GM10248 (cell line): ENCODE measurements at regions of chr6 and their contacts with region 1.

Region 1: DNA sequence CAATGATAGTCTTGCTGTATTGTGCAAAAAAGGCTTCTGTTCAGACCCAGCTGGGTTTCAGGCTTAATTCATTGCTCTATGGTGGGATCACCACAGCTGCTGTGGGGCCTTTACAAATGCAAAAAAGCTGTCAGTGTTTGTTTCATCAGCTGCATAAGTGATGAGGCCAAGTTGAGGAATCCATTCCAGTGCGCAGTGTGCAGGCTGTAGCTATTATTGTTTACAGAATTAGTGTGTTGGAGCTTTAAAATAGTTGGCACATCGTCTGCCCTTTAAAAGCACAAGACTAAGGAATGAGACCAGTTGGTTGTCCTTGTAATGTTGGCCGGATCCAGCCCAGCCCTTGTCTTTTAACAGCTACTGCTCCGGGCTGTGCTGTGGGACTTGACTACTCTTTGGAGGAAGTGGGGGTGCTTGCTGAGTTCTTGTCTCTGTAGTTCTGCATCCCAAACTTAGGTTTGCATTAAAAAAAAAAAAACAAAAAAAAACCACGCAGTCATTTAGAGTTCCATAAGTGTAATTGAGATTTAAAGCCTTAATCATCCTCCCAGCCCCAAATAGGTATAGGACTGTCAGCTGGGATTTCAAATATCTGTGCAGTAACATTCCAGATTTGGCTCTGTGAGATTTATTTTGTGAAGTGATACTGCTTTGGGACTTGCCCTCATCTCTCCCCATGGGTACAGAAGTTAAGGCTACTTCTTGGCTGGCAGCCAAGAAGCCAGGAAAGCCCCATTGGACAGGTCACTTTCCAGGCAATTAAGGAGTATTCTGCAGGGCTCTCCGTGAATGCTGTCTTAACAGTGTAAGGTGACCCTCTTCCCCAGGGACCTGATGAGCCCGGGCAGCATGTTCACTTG is 19.3 kb downstream of the JARID2 start:
- DNase-seq: no peak
- CTCF ChIP-seq: no peak

Region 2: DNA sequence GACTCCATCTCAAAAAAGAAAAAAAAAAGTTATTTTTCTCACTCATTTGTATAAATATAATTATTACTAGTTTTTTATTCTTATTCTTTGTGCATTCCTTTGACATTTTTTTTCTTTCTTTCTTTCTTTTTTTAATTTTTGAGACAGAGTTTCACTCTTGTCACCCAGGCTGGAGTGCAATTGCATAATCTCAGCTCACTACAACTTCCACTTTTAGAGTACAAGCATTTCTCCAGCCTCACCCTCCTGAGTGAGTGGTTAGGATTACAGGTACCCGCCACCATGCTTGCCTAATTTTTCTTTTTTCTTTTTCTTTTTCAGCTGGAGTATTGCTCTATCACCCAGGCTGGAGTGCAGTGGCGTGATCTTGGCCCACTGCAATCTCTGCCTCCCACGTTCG is 70.7 kb before region 1 on chr6:
- CTCF ChIA-PET with region 1: no interaction called
- POLR2A ChIA-PET with region 1: no interaction called
- DNase-seq: no peak
- CTCF ChIP-seq: no peak

Region 3: DNA sequence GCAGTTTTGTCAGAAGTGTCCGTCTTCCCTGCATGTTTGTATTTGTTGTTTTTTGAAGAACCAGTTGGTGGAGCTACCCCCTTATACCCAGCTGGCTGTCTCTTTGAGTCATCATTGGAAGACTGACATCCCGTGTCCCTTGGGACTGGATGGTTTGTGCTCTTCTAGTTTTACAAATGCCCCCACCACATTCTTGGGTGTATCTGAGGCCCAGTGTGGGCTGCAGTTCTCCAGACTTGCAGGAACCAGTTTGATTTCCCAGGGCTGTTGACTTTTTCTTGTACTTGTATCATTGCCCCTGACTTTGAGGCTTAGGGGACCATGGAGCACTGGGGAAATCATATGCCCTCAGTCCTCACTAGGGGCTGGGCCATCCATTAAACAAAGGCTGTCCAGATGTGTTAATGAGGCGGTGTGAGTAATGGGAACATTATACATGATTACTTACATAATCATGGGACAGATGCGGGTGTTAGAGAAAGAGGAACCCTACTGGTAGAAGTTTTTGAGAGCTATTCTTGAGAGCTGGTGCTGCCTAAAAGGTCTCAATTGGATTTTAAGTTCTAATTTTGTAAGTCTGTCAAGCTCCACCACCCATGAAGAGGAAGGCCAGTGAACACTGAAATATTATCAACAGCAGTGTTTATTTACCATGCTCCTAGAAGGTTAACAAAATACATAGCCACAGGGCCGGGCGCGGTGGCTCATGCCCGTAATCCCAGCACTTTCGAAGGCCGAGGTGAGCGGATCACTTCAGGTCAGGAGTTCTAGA is 10.9 kb before region 1 on chr6:
- CTCF ChIA-PET with region 1: interaction called, 37 read pairs
- POLR2A ChIA-PET with region 1: no interaction called
- DNase-seq: no peak
- CTCF ChIP-seq: peak; percentile 31

Region 4: DNA sequence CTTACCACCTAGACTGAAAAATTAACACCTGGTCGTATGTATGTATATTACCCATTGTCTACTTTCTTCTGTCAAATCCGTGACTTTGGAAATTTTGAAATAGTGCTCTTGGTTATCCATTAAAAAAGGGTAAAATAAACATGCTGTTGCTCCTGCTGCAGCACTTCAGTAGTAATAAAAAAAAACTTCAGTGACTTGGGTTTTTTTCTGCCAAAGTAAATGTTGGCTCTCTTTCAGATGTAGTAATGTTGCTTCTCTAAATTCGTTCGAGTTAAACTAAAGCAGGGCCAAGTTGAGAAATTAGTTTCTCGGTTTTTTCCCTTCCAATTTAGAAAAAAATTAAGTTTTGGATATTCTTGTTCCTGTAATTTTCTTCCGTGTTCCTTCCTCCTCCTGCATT is 14.9 kb after region 1 on chr6:
- CTCF ChIA-PET with region 1: interaction called, 26 read pairs
- POLR2A ChIA-PET with region 1: no interaction called
- DNase-seq: no peak
- CTCF ChIP-seq: no peak